CD14-positive monocyte (primary cell): ENCODE measurements at regions of chr12 and their contacts with region 1.

Region 1: GRCh38 chr12:108342985-108343384 is 3.9 kb upstream of the CMKLR1 start:
- DNase-seq: no peak
- H3K4me3 ChIP-seq: no peak overlapping the region
- H3K4me3 Mint-ChIP-seq: no peak overlapping the region
- H3K27ac ChIP-seq: no peak overlapping the region
- H3K27ac Mint-ChIP-seq: peak overlapping the region in 1 of 7 donors; percentile 72
- H3K4me1 ChIP-seq: peaks cover 22 to 35% of the 10 kb centered on the region in 2 donors
- H3K4me1 Mint-ChIP-seq: peaks cover 34% of the 10 kb centered on the region
- H3K27me3 ChIP-seq: no peaks in the 10 kb centered on the region
- H3K27me3 Mint-ChIP-seq: peaks cover 2 to 18% (median 5%) of the 10 kb centered on the region in 3 donors
- CTCF ChIP-seq: no peak

Region 2: GRCh38 chr12:108305520-108305919 is 37.5 kb before region 1 on chr12:
- intact Hi-C with region 1: loop called in 1 of 2 experiments (anchors 5 kb)
- DNase-seq: peak; percentile 32 to 74 (median 59)
- H3K4me3 ChIP-seq: peak overlapping the region in 1 of 3 experiments; percentile 33
- H3K4me3 Mint-ChIP-seq: peak overlapping the region; percentile 67 to 84
- H3K27ac ChIP-seq: peak overlapping the region in 1 of 2 donors; percentile 46
- H3K27ac Mint-ChIP-seq: peak overlapping the region in 6 of 7 donors; percentile 20 to 80 (median 68)
- H3K4me1 ChIP-seq: peaks cover 45 to 55% of the 10 kb centered on the region in 2 donors
- H3K4me1 Mint-ChIP-seq: peaks cover 61% of the 10 kb centered on the region
- H3K27me3 ChIP-seq: no peaks in the 10 kb centered on the region
- H3K27me3 Mint-ChIP-seq: peaks cover 12 to 15% (median 15%) of the 10 kb centered on the region in 3 donors
- CTCF ChIP-seq: no peak